Adrenal gland (tissue), 19 donors: ENCODE measurements at regions of chr11 and their contacts with region 1.

Region 1: GRCh38 chr11:123511037-123511870 is 81.2 kb downstream of the GRAMD1B start:
- DNase-seq: peak; percentile 92 to 98 (median 96)
- H3K4me3 ChIP-seq: no peak overlapping the region
- H3K27ac ChIP-seq: peak overlapping the region in 3 of 5 donors; percentile 71 to 81 (median 77)
- H3K4me1 ChIP-seq: peaks cover 14 to 36% of the 10 kb centered on the region in 2 donors
- H3K27me3 ChIP-seq: no peaks in the 10 kb centered on the region
- CTCF ChIP-seq: peak; percentile 84 to 94 (median 88)
- POLR2A ChIP-seq: peak in 1 of 2 donors; percentile 67

Region 2: DNA sequence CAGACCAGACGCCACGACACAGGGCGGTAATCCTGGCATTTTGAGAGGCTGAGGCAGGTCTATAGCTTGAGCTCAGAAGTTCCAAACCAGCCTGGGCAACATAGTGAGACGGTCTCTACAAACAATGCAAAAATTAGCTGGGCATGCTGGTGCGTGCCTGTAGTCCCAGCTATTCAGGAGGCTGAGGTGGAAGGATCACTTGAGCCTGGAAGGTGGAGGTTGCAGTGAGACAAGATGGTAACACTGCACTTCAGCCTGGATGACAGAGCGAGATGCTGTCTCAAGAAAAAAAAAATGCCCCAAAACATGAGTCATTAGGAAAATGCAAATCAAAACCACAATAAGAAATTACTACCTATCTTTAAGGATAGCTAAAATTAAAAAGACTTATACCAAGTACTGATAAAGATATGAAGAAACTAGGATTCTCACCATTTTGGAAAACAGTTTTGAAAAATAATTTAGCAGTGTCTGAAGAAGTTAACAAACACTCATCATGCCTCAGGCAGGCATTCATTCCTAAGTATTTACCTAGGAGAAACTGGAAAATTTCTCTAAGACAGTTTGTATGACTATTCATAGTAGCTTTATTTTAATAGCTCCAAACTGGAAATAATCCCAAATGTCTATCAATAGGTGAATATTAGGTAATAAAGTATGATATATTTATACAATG is 172.8 kb before region 1 on chr11:
- intact Hi-C with region 1: no loop called
- DNase-seq: no peak
- H3K4me3 ChIP-seq: no peak overlapping the region
- H3K27ac ChIP-seq: no peak overlapping the region
- H3K4me1 ChIP-seq: no peaks in the 10 kb centered on the region
- H3K27me3 ChIP-seq: no peaks in the 10 kb centered on the region
- CTCF ChIP-seq: no peak
- POLR2A ChIP-seq: no peak

Region 3: DNA sequence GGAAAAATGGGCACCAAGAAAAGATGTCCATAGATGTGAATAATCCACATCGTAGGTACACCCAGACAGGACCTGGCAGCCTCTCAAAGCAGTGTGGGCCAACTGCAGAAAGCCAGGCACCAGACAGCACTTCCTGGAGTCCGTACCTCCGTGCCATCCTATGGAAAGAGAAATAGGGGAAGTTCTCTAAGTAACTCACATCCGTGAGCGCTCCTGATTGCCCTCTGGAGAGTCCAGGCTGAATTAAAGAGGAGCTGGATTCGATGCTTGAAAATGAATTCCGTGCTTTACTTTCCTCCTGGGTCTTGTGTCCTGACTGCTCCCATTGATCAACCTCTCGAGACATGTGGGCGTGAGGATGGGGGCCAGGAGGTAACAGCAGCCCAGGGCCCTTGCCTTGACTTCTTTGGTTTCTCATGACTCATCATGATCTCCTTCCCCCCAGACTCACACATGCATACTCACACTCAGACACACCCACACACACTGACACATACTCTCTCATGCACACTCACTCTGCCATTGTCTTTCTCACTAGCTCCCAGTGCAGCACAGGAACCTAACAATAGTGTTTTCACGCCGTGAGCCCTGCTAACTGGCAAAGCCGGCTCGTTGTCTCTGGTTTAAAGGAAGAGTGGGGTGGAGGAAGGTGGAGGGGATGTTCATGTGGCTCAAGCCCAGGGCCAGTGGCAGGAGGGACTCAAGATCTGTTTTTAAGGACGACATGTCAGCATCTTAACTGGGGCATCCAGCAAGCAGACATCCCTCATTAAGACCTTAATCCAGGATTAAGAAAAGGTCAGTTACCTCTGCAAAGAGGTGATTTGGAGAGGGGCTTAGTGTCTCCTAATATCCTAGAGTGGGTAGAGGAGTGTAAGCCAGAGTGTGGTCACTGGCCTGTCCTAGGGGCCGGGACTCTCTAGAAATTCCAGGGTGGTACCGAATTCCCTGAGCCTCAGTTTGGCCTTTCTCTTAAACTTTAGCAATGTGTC is 39.0 kb after region 1 on chr11:
- intact Hi-C with region 1: loop called (anchors 5 kb)
- DNase-seq: peak in 2 of 7 donors; percentile 30 to 58
- H3K4me3 ChIP-seq: no peak overlapping the region
- H3K27ac ChIP-seq: peak overlapping the region in 3 of 5 donors; percentile 29 to 66 (median 37)
- H3K4me1 ChIP-seq: peaks cover 16 to 47% of the 10 kb centered on the region in 2 donors
- H3K27me3 ChIP-seq: no peaks in the 10 kb centered on the region
- CTCF ChIP-seq: no peak
- POLR2A ChIP-seq: no peak

Region 4: DNA sequence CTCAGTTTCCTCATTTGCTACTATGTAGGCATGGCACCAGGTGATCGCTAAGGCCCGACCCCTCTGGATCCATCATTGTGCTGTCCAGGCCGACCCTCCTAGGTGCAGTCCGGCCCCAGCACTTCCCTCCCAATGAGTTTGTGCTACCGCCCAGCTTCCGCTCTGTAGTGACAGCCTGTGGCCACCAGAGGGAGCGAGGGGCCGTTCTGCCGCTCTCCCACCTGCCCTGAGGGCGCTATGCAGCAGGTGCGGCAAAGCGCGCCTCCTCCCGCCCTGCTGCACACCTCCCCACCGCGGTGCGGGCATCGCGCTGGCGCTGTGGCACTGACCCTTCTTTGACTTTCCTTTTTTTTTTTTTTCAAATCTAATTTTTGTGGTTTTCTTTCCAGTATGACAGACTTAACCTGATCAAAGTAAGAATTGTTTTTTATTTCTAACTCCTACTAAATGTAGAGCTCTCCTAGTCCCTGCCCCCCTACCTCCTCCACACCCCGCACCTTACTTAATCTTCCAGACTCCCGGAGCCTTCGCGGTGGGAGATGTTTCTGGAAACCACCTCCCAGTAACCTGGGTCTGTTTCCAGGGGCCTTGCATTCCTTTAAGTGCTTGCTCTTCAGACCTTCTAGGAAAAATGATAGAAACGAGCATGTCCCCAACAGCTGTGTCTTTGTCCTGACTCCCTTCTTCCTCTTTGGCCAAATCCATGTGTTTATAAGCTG is 69.5 kb after region 1 on chr11:
- intact Hi-C with region 1: loop called in 1 of 2 experiments (anchors 5 kb)
- DNase-seq: peak in 6 of 7 donors; percentile 64 to 81 (median 68)
- H3K4me3 ChIP-seq: no peak overlapping the region
- H3K27ac ChIP-seq: peak overlapping the region in 3 of 5 donors; percentile 11 to 58 (median 48)
- H3K4me1 ChIP-seq: peaks cover 6 to 34% of the 10 kb centered on the region in 2 donors
- H3K27me3 ChIP-seq: no peaks in the 10 kb centered on the region
- CTCF ChIP-seq: peak; percentile 87 to 93 (median 88)
- POLR2A ChIP-seq: no peak